ENCODE measurements at regions of chr1 and their contacts with region 1.

Region 1: GRCh38 chr1:155479205-155479604 is 83.4 kb downstream of the ASH1L start:
- DNase-seq: no peak
- ATAC-seq: peak; percentile 58
- H3K4me3 Mint-ChIP-seq: no peak overlapping the region
- H3K27ac Mint-ChIP-seq: peak overlapping the region; percentile 30
- H3K4me1 Mint-ChIP-seq: peaks cover 22% of the 10 kb centered on the region
- H3K27me3 Mint-ChIP-seq: no peaks in the 10 kb centered on the region
- CTCF ChIP-seq: no peak

Region 2: DNA sequence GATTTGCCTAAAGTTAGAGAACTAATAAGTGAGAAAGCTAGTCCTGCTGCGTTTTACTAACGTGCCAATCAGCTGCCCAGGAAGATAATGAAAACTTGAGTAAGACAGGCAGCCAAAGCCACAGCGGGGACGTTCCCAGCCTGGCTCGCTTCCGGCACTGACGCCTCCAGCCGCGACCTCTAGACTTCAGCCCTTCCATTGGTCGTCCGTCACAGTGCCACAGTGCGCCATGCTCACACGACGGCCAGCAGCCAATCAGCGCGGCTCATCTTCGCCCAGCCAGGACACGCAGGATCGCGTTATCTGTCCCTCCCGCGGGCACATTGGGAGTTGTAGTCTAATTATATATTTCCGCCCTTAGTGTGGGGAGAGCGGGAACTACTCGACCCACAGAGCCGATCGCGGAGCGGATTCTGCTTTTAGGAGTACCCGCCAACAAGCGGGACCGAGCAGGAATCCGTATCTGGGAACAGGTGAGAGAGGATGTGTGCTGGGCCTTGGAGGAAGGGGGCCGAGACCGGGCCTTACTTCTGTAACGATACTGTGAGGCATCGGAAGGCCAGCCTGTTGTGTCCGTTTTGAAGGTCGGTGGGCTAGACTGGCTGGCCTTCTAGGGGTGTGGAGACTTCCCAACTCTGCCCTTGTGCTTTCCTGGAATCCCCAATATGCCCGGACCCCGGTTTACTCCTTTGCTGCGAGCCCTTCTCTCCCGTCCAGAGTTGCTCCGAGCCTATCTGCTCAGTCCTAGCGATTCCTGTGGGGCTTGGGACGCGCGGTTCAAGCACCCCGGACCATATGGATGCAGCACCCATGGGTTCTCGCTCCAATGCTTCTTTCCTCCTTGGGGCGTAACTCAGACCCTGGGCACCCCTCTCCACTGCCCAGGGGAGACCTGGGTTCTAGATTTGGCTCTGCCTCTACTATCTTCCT is 170.4 kb before region 1 on chr1 and contains the start of gene FDPS:
- CTCF ChIA-PET with region 1: no interaction called
- POLR2A ChIA-PET with region 1: no interaction called
- intact Hi-C with region 1: no loop called
- DNase-seq: peak; percentile 87
- ATAC-seq: peak; percentile 97
- H3K4me3 Mint-ChIP-seq: peak within 1 kb of the TSS; percentile 94
- H3K27ac Mint-ChIP-seq: peak within 1 kb of the TSS; percentile 92
- H3K4me1 Mint-ChIP-seq: peaks cover 32% of the 10 kb centered on the region
- H3K27me3 Mint-ChIP-seq: no peaks in the 10 kb centered on the region
- CTCF ChIP-seq: no peak
- total RNA-seq, gene FDPS: 241 and 242 TPM in 2 replicates

Region 3: GRCh38 chr1:155437405-155437804 is 41.8 kb before region 1 on chr1:
- CTCF ChIA-PET with region 1: no interaction called
- POLR2A ChIA-PET with region 1: interaction called, 10 read pairs
- intact Hi-C with region 1: no loop called
- DNase-seq: no peak
- ATAC-seq: no peak
- H3K4me3 Mint-ChIP-seq: no peak overlapping the region
- H3K27ac Mint-ChIP-seq: no peak overlapping the region
- H3K4me1 Mint-ChIP-seq: peaks cover 2% of the 10 kb centered on the region
- H3K27me3 Mint-ChIP-seq: no peaks in the 10 kb centered on the region
- CTCF ChIP-seq: no peak

Region 4: GRCh38 chr1:155466996-155467395 is 12.2 kb before region 1 on chr1:
- CTCF ChIA-PET with region 1: interaction called, 6 read pairs
- POLR2A ChIA-PET with region 1: no interaction called
- intact Hi-C with region 1: loop called (anchors 2 kb)
- DNase-seq: no peak
- ATAC-seq: no peak
- H3K4me3 Mint-ChIP-seq: no peak overlapping the region
- H3K27ac Mint-ChIP-seq: peak overlapping the region; percentile 86
- H3K4me1 Mint-ChIP-seq: peaks cover 58% of the 10 kb centered on the region
- H3K27me3 Mint-ChIP-seq: no peaks in the 10 kb centered on the region
- CTCF ChIP-seq: no peak

Measured in activated B cell treated with CpG ODN at 0.5 μM for 24 hours (primary cell).